ENCODE measurements at regions of chr12 and their contacts with region 1.

Region 1: DNA sequence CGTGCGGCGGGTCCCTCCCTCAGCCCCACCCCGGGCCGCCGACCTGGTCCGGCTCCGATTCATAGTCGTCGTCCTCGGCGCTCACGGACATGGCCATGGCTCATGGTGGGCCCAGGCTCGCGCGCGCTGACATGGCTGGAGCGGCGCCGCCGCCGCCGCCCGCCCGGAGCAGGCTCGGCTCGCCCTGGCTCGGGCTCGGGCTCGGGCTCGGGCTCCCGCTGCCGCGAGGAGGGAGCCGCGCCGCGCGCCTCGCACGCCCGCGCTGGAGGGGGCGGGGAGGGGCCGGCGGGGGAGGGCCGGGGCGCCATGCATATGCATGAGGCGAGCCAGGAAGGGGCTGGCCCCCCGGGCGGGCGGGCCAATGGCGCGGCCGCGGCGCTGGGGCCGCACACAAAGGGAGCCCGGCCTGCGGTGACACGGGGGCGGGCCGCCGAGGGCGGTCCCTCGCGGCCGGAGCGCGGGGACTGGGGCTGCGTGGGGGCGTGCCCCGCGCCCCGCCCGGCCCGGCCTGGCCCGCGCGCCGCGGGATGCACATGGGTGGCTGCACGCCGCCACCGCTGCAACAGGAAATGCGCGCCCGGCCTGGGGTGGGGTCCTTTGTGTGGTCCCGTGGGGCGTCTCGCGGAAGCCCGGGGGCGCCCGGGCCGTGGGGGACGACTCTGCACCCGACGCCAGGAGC is 67.3 kb downstream of the RNF34 start:
- DNase-seq: peak; percentile 85 to 91 (median 87)
- H3K4me3 ChIP-seq: peak overlapping the region in 1 of 2 donors; percentile 35
- H3K4me3 Mint-ChIP-seq: peak overlapping the region in 5 of 8 donors; percentile 21 to 74 (median 47)
- H3K27ac ChIP-seq: peak overlapping the region; percentile 42
- H3K27ac Mint-ChIP-seq: no peak overlapping the region
- H3K4me1 ChIP-seq: peaks cover 25% of the 10 kb centered on the region
- H3K4me1 Mint-ChIP-seq: peaks cover 17 to 30% (median 22%) of the 10 kb centered on the region in 4 donors
- H3K27me3 ChIP-seq: no peaks in the 10 kb centered on the region
- H3K27me3 Mint-ChIP-seq: no peaks in the 10 kb centered on the region

Region 2: GRCh38 chr12:121483949-121484348 is 16.7 kb after region 1 on chr12:
- CTCF ChIA-PET with region 1: interaction called, 30 read pairs
- POLR2A ChIA-PET with region 1: interaction called, 14 read pairs
- intact Hi-C with region 1: no loop called
- DNase-seq: no peak
- H3K4me3 ChIP-seq: no peak overlapping the region
- H3K4me3 Mint-ChIP-seq: no peak overlapping the region
- H3K27ac ChIP-seq: no peak overlapping the region
- H3K27ac Mint-ChIP-seq: peak overlapping the region in 3 of 7 donors; percentile 22 to 48 (median 47)
- H3K4me1 ChIP-seq: no peaks in the 10 kb centered on the region
- H3K4me1 Mint-ChIP-seq: peaks cover 1 to 22% (median 3%) of the 10 kb centered on the region in 4 donors
- H3K27me3 ChIP-seq: no peaks in the 10 kb centered on the region
- H3K27me3 Mint-ChIP-seq: no peaks in the 10 kb centered on the region